ENCODE measurements at regions of chr16 and their contacts with region 1.

Region 1: GRCh38 chr16:48231727-48232492 is 12.2 kb upstream of the LONP2 start:
- DNase-seq: peak; percentile 65
- CTCF ChIP-seq: peak; percentile 68

Region 2: GRCh38 chr16:48218473-48218872 is 13.4 kb before region 1 on chr16:
- CTCF ChIA-PET with region 1: interaction called, 12 read pairs
- POLR2A ChIA-PET with region 1: no interaction called
- DNase-seq: no peak
- CTCF ChIP-seq: no peak

Region 3: GRCh38 chr16:48271728-48272127 is 39.8 kb after region 1 on chr16:
- CTCF ChIA-PET with region 1: no interaction called
- POLR2A ChIA-PET with region 1: no interaction called
- DNase-seq: no peak
- CTCF ChIP-seq: no peak

Measured in GM10248 (cell line).